MCF 10A (cell line): ENCODE measurements at regions of chr11 and their contacts with region 1.

Region 1: GRCh38 chr11:86802601-86803051 is 2.3 kb downstream of the PRSS23 start:
- DNase-seq: peak; percentile 61
- H3K4me3 Mint-ChIP-seq: no peak overlapping the region
- H3K27ac Mint-ChIP-seq: no peak overlapping the region
- H3K4me1 Mint-ChIP-seq: peaks cover 11% of the 10 kb centered on the region
- H3K27me3 Mint-ChIP-seq: no peaks in the 10 kb centered on the region
- CTCF ChIP-seq: peak; percentile 69

Region 2: GRCh38 chr11:86632499-86633269 is 169.9 kb before region 1 on chr11:
- CTCF ChIA-PET with region 1: interaction called, 8 read pairs
- POLR2A ChIA-PET with region 1: interaction called, 3 read pairs
- intact Hi-C with region 1: loop called (anchors 1 kb)
- DNase-seq: peak; percentile 79
- H3K4me3 Mint-ChIP-seq: no peak overlapping the region
- H3K27ac Mint-ChIP-seq: peak overlapping the region; percentile 27
- H3K4me1 Mint-ChIP-seq: peaks cover 5% of the 10 kb centered on the region
- H3K27me3 Mint-ChIP-seq: no peaks in the 10 kb centered on the region
- CTCF ChIP-seq: no peak

Region 3: GRCh38 chr11:86671682-86672621 is 130.7 kb before region 1 on chr11 and contains the start of gene ME3:
- CTCF ChIA-PET with region 1: no interaction called
- POLR2A ChIA-PET with region 1: no interaction called
- intact Hi-C with region 1: loop called (anchors 5 kb)
- DNase-seq: no peak
- H3K4me3 Mint-ChIP-seq: peak within 1 kb of the TSS; percentile 46
- H3K27ac Mint-ChIP-seq: no peak within 1 kb of the TSS
- H3K4me1 Mint-ChIP-seq: peaks cover 4% of the 10 kb centered on the region
- H3K27me3 Mint-ChIP-seq: no peaks in the 10 kb centered on the region
- CTCF ChIP-seq: no peak
- total RNA-seq, gene ME3: 0.49 TPM in 1 of 2 replicates, not detected in the other

Region 4: DNA sequence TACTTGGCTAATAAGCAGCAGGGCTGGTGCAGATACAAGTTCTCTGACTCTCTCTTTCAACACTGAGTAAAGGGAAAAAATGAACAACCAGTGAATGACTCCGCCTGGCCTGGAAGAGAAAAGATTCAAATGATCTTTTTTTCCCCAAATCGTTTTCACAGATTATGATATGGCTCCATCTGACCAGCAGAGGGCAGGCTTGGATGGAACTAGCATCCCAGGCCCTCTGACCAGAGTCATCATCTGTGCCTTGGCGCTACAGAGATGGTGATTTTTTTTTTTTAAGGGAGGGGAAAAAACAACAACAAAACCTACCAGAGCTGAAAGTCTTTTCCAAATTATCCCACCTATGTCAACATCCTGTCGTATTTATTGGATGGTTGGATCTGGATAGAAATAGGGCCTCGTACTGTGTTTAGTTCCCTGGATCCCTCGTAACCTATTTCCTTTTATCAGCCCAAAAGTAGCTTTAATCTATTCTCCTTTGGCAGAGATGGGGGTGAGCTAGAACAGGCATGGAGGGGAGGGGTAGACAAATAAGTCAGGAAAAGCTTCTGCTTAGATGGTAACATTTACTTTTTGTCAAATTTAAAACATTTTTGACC is 67.4 kb after region 1 on chr11:
- CTCF ChIA-PET with region 1: no interaction called
- POLR2A ChIA-PET with region 1: no interaction called
- intact Hi-C with region 1: no loop called
- DNase-seq: peak; percentile 71
- H3K4me3 Mint-ChIP-seq: no peak overlapping the region
- H3K27ac Mint-ChIP-seq: no peak overlapping the region
- H3K4me1 Mint-ChIP-seq: peaks cover 5% of the 10 kb centered on the region
- H3K27me3 Mint-ChIP-seq: no peaks in the 10 kb centered on the region
- CTCF ChIP-seq: peak; percentile 81

Region 5: GRCh38 chr11:86931548-86932258 is 129.1 kb after region 1 on chr11:
- CTCF ChIA-PET with region 1: no interaction called
- POLR2A ChIA-PET with region 1: no interaction called
- intact Hi-C with region 1: no loop called
- DNase-seq: peak; percentile 61
- H3K4me3 Mint-ChIP-seq: no peak overlapping the region
- H3K27ac Mint-ChIP-seq: no peak overlapping the region
- H3K4me1 Mint-ChIP-seq: peaks cover 12% of the 10 kb centered on the region
- H3K27me3 Mint-ChIP-seq: no peaks in the 10 kb centered on the region
- CTCF ChIP-seq: no peak

Region 6: DNA sequence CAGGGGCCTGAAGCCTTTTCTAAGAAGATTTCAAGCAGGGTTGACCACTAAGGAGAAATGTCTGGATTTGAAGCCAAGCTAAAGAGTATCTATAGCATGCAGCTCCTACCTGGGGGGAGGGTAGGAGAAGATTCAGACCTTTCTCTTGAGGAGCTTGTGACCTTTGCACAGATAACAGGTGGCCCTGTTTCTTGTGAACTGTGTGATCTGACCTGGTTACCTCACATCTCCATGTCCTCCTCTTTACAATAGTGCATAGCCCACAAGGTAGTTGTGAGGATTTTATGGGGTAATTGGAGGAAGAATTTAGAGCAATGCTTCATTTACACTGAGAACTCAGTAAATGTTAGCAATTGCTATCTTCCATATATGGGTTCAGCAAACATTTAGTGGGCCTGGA is 545.2 kb after region 1 on chr11:
- CTCF ChIA-PET with region 1: no interaction called
- POLR2A ChIA-PET with region 1: no interaction called
- intact Hi-C with region 1: no loop called
- DNase-seq: no peak
- H3K4me3 Mint-ChIP-seq: no peak overlapping the region
- H3K27ac Mint-ChIP-seq: no peak overlapping the region
- H3K4me1 Mint-ChIP-seq: no peaks in the 10 kb centered on the region
- H3K27me3 Mint-ChIP-seq: no peaks in the 10 kb centered on the region
- CTCF ChIP-seq: no peak